ENCODE measurements at regions of chr5 and their contacts with region 1.

Region 1: GRCh38 chr5:171957591-171958251 is 48.7 kb downstream of the FBXW11 start:
- DNase-seq: no peak
- ATAC-seq: no peak
- H3K4me3 ChIP-seq: no peak overlapping the region
- H3K27ac ChIP-seq: no peak overlapping the region
- H3K4me1 ChIP-seq: peaks cover 22% of the 10 kb centered on the region
- H3K27me3 ChIP-seq: no peaks in the 10 kb centered on the region
- CTCF ChIP-seq: no peak
- POLR2A ChIP-seq: no peak
- RAD21 ChIP-seq: no peak

Region 2: DNA sequence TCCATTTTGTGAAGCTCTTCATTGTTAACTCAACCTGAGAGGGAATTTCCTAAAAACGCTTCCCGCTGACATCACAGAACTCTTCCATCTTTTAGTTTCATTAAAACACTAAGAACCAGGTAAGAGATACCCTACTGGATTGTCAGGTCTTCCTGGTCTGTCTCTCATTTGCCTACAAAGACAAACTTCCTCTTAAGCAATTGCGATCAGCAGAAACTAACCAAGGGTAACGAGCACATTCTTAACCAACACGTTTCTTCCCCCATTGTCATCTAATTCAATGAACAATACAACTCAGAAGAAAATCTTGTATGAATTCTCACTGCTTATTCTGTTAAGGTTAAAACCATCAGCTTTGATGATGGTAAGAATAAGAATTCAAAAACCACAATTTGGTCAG is 42.2 kb after region 1 on chr5:
- CTCF ChIA-PET with region 1: no interaction called
- POLR2A ChIA-PET with region 1: no interaction called
- dilution Hi-C with region 1: no loop called
- in situ Hi-C with region 1: no loop called
- intact Hi-C with region 1: loop called (anchors 5 kb)
- DNase-seq: no peak
- ATAC-seq: no peak
- H3K4me3 ChIP-seq: no peak overlapping the region
- H3K27ac ChIP-seq: no peak overlapping the region
- H3K4me1 ChIP-seq: peaks cover 8% of the 10 kb centered on the region
- H3K27me3 ChIP-seq: no peaks in the 10 kb centered on the region
- CTCF ChIP-seq: no peak
- POLR2A ChIP-seq: no peak
- RAD21 ChIP-seq: no peak

Region 3: DNA sequence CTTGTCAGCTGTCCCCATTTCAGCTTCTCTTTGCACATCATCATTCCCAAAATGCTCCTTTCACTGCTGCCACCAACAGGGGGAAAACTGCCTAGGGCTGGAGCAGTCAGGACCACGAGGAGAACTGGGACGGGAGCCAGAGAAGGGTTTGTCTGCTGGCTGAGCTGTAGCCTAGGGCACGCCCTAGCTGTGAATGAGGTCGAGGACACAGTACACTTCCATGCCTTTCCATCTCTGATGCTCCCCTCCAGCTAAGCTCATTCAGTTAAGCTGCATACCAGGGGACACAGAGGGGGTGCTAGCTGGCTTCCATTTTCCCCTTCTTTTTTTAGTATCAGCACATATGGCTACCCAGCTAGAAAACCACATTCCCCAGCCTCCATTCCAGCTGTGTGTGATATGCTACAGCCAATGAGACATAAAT is 165.6 kb after region 1 on chr5:
- CTCF ChIA-PET with region 1: no interaction called
- POLR2A ChIA-PET with region 1: no interaction called
- dilution Hi-C with region 1: no loop called
- in situ Hi-C with region 1: no loop called
- intact Hi-C with region 1: no loop called
- DNase-seq: peak; percentile 67
- ATAC-seq: peak; percentile 93
- H3K4me3 ChIP-seq: no peak overlapping the region
- H3K27ac ChIP-seq: no peak overlapping the region
- H3K4me1 ChIP-seq: peaks cover 5% of the 10 kb centered on the region; the same call in 1 of the 2 replicates
- H3K27me3 ChIP-seq: no peaks in the 10 kb centered on the region
- CTCF ChIP-seq: peak; percentile 31; the same call in 1 of the 2 replicates
- POLR2A ChIP-seq: no peak
- RAD21 ChIP-seq: peak; percentile 29; the same call in 1 of the 2 replicates